AG04449 (cell line): ENCODE measurements at regions of chr2 and their contacts with region 1.

Region 1: DNA sequence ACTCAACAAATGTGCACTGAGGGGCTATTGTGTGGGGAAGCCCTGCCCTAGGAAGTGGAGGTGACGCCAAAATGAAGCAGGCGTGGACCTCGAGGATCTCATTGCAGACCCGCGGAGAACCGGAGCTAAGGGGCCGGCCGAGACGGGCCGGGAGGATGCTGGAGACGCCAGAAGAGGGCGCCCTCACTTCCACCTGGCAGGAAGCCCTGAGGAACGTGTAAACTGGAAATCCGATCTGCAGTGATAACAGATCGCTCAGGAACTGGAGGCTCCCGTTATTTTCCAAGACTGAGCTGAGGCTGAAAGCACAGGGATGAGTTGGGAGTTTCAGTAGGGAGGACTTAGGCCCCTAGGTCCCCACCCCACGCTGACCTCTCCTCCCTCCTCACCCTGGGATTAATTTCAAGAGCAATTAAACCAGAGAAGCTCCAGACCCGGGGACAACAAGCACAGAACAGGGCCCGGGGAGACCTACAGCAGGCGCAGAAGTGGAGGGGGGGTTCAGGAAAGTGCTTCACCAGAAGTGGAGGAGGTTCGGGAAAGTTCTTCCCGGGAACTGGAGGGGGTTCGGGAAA is 7.7 kb upstream of the COL6A3 start:
- DNase-seq: no peak
- H3K4me3 ChIP-seq: no peak overlapping the region
- CTCF ChIP-seq: peak; percentile 91

Region 2: DNA sequence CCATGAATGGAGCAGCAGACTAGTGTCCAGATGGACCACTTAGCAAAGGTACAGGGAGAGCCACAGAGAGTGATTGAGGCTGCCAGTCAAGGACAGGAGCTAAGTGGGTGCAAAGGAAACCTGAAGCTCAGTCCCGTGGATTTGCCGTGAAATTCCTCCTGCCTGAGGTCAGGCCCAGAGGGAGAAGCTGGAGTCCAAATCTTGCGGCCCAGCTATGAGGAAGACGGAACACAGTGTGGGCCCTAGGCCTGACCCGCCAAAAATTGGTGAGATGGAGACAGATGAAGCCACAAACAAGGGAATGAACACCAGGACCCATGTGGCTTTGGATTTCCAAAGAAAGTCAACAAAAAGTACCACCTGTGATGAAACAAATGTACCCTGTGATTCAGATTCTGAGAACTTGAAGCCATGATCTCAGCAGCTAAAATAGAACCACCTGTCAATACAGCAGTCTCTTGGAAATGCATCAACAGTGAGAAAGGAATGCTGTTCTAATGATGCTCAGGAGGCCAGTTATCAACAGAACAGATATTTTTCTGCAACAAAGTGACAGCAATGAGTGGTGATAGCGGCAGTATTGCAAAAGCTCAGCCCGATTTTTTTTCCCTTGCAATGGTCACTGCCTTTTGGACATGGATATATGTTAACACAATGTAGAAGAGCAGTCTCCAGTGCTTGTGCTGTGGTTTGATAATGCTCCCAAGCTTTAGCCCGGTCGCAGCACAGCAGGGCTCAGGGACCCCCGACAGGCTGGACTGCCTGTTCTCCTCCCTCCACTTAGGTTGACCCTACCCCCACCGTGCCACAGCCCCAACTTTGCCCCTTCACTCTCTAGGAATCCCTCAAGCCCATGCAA is 18.4 kb before region 1 on chr2:
- CTCF ChIA-PET with region 1: interaction called, 26 read pairs
- POLR2A ChIA-PET with region 1: interaction called, 3 read pairs
- DNase-seq: no peak
- H3K4me3 ChIP-seq: no peak overlapping the region
- CTCF ChIP-seq: no peak

Region 3: GRCh38 chr2:237408335-237409000 is 13.2 kb before region 1 on chr2:
- CTCF ChIA-PET with region 1: interaction called, 200 read pairs
- POLR2A ChIA-PET with region 1: interaction called, 76 read pairs
- DNase-seq: no peak
- H3K4me3 ChIP-seq: peak overlapping the region; percentile 44
- CTCF ChIP-seq: no peak

Region 4: GRCh38 chr2:237434866-237435311 is 13.3 kb after region 1 on chr2:
- CTCF ChIA-PET with region 1: interaction called, 200 read pairs
- POLR2A ChIA-PET with region 1: interaction called, 6 read pairs
- DNase-seq: peak; percentile 40
- H3K4me3 ChIP-seq: no peak overlapping the region
- CTCF ChIP-seq: no peak

Region 5: GRCh38 chr2:237441605-237442274 is 20.1 kb after region 1 on chr2:
- CTCF ChIA-PET with region 1: interaction called, 200 read pairs
- POLR2A ChIA-PET with region 1: no interaction called
- DNase-seq: peak; percentile 38
- H3K4me3 ChIP-seq: no peak overlapping the region
- CTCF ChIP-seq: no peak

Region 6: GRCh38 chr2:237456200-237456843 is 34.7 kb after region 1 on chr2:
- CTCF ChIA-PET with region 1: interaction called, 115 read pairs
- POLR2A ChIA-PET with region 1: no interaction called
- DNase-seq: peak; percentile 59
- H3K4me3 ChIP-seq: no peak overlapping the region
- CTCF ChIP-seq: no peak

Region 7: DNA sequence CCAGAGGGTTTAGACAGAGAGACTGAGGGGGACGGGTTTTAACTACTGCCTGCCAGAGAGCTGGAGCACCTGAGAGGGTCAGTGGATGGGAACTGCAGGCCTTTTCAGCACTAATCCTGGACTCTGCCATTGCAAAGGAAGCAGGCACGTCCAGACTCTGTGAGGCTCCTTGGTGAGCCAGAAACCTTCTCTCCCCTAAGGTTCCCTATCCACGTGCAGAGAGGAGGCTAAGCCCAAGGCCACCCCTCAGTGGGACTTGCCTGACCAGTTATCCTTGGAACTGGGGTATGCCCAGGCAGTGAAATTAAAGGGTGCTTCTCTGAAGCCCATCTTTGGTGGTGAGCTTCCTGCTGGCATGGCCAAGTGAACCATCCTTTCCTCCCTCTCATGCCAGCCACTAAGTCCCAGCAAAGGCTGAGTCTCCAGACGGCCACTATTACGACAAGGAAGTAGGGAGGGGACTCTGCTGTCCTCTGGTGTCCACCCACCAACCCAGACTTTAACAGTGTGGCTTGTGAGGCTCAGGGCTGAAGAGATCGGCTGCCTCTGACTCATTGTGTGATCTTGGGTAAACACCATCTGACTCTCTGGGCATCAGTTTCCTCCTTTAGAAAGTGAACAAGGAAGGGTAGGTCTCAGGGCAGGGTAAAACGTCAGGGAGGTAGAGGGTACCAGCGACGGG is 61.6 kb after region 1 on chr2:
- CTCF ChIA-PET with region 1: interaction called, 57 read pairs
- POLR2A ChIA-PET with region 1: no interaction called
- DNase-seq: peak; percentile 57
- H3K4me3 ChIP-seq: no peak overlapping the region
- CTCF ChIP-seq: peak; percentile 59

Region 8: DNA sequence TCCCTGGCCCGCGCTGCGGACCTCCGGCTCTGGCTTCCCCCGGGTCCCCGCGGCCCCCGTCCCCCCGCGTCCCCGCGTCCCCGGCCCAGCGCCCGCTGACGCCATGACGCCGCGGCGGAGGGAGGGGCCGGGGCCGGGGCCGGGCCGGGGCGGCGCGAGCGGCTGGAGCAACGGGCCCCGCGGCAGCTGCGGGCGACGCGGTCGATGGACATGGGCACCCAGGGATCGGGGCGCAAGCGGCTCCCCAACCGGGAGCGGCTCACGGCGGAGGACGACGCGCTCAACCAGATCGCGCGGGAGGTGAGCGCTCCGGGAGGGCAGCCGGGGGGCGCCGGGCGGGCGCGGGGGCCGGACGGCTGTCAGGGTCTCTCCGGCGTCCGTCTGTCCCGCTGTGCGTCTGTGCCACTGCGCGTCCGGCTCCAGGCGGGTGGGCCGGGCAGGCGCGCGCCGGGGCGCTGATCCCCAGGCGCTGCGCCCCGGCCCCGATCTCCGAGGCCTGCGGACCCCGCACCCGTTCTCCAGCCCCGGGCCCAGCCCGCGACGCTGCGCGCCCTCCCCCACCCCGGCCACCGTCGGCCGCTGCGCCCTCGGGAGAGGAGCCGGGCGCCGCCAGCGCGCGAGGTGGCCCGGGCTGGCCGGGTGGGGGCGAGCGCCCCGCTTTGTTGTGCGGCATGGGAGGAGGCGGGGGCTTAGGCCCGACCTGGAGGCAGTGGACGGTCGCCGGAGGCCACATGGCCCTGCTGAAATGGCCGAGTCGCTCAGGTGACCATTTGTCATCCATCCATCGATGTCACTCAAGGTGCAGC is 206.0 kb after region 1 on chr2 and contains the start of gene LRRFIP1:
- CTCF ChIA-PET with region 1: no interaction called
- POLR2A ChIA-PET with region 1: no interaction called
- DNase-seq: no peak
- H3K4me3 ChIP-seq: peak within 1 kb of the TSS; percentile 68
- CTCF ChIP-seq: no peak

Region 9: GRCh38 chr2:237854295-237854694 is 432.7 kb after region 1 on chr2:
- CTCF ChIA-PET with region 1: no interaction called
- POLR2A ChIA-PET with region 1: no interaction called
- DNase-seq: no peak
- H3K4me3 ChIP-seq: no peak overlapping the region
- CTCF ChIP-seq: no peak